SK-N-SH (cell line): ENCODE measurements at regions of chr12 and their contacts with region 1.

Region 1: DNA sequence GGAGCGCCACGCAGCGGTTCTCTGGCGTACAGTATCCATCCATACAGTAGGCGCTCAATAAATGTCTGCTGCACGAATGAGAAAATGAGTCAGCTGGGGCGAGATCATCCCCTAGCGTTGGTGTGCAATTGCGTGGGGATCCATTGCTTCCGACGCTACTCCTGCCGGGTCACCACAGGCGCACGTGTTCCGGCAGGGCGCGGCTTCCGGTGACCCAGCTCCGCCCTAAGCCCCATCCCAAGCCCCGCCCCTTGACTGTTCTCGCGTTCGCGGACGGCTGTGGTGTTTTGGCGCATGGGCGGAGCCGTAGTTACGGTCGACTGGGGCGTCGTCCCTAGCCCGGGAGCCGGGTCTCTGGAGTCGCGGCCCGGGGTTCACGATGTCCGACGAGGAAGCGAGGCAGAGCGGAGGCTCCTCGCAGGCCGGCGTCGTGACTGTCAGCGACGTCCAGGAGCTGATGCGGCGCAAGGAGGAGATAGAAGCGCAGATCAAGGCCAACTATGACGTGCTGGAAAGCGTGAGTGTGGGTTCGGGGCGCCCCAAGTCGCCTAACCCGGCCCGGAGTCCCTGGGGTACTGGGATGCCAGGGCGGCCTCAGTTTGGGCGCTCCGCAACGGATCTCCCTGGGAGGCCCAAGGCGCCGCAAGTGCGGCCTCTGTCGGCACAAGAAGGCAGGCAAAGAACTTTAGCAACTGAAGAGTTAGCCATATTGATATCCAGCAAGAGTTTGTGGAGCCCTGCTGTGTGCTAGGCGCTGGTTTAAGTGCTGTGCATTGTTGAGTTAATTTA is at the start of gene PSMD9:
- DNase-seq: peak; percentile 97
- H3K4me3 ChIP-seq: peak within 1 kb of the TSS; percentile 68 to 86
- H3K27ac ChIP-seq: peak within 1 kb of the TSS; percentile 85 to 94
- H3K4me1 ChIP-seq: peaks cover 8 to 9% of the 10 kb centered on the region in 2 experiments; a peak in 3 of 4 replicates
- H3K27me3 ChIP-seq: no peaks in the 10 kb centered on the region
- CTCF ChIP-seq: peak; percentile 68
- EP300 ChIP-seq: no peak
- RAD21 ChIP-seq: peak; percentile 73
- polyA plus RNA-seq, gene PSMD9: 227 and 234 TPM in 2 replicates

Region 2: GRCh38 chr12:121802846-121803630 is 85.6 kb before region 1 on chr12:
- CTCF ChIA-PET with region 1: interaction called, 186 read pairs
- POLR2A ChIA-PET with region 1: interaction called, 34 read pairs
- DNase-seq: peak; percentile 88
- H3K4me3 ChIP-seq: peak overlapping the region; percentile 70 to 73
- H3K27ac ChIP-seq: peak overlapping the region; percentile 98 to 99
- H3K4me1 ChIP-seq: peaks cover 19 to 30% of the 10 kb centered on the region in 2 experiments
- H3K27me3 ChIP-seq: no peaks in the 10 kb centered on the region
- CTCF ChIP-seq: no peak
- EP300 ChIP-seq: no peak
- RAD21 ChIP-seq: no peak

Region 3: DNA sequence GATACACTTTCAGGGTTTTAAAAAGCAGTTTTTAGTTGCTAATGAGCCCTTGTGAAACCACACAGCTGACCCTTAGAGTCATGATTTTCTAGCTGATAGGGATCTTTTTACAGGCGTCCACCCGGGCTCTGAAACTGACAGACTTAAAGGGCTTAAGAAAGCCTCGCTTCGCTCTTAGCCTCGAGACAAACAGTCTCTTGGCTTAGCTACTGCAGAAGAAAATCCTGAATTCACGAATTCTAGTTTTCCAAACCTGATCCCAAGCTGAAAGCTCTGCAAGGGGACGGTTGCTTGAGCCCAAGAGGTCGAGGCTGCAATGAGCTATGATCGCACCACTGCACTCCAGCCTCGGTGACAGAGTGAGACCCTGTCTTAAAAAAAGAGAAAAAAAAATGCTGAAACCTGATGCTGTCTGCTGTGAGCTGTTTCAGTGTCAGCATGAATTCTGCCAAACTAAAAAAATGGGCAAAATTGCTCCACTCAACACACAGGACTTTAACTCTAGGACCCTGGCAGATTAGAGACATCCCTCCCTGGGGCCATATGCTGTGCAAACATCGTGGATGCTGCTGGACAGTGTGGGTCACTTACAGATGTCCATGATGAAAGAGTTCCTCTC is 26.9 kb before region 1 on chr12:
- CTCF ChIA-PET with region 1: interaction called, 10 read pairs
- POLR2A ChIA-PET with region 1: no interaction called
- DNase-seq: peak; percentile 60
- H3K4me3 ChIP-seq: no peak overlapping the region
- H3K27ac ChIP-seq: peak overlapping the region; percentile 20 to 59; a peak in 3 of 4 replicates
- H3K4me1 ChIP-seq: peaks cover 7 to 15% of the 10 kb centered on the region in 2 experiments; a peak in 3 of 4 replicates
- H3K27me3 ChIP-seq: no peaks in the 10 kb centered on the region
- CTCF ChIP-seq: no peak
- EP300 ChIP-seq: no peak
- RAD21 ChIP-seq: no peak

Region 4: GRCh38 chr12:121872546-121873215 is 16.0 kb before region 1 on chr12:
- CTCF ChIA-PET with region 1: interaction called, 14 read pairs
- POLR2A ChIA-PET with region 1: interaction called, 13 read pairs
- DNase-seq: peak; percentile 86
- H3K4me3 ChIP-seq: no peak overlapping the region; a peak in 1 of 4 replicates
- H3K27ac ChIP-seq: peak overlapping the region; percentile 85 to 90
- H3K4me1 ChIP-seq: peaks cover 10 to 13% of the 10 kb centered on the region in 2 experiments; a peak in 3 of 4 replicates
- H3K27me3 ChIP-seq: no peaks in the 10 kb centered on the region
- CTCF ChIP-seq: no peak
- EP300 ChIP-seq: peak; percentile 13 to 19; a peak in 2 of 4 replicates
- RAD21 ChIP-seq: no peak; the same call in 1 of the 2 replicates